ENCODE measurements at regions of chr4 and their contacts with region 1.

Region 1: GRCh38 chr4:44678094-44679041 is at the start of gene GUF1:
- DNase-seq: peak; percentile 78 to 94 (median 90)
- ATAC-seq: peak; percentile 90 to 91
- H3K4me3 Mint-ChIP-seq: peak within 1 kb of the TSS; percentile 93 to 100 (median 97)
- H3K27ac Mint-ChIP-seq: peak within 1 kb of the TSS; percentile 97 to 100 (median 100)
- H3K4me1 Mint-ChIP-seq: peaks cover 13 to 45% (median 34%) of the 10 kb centered on the region in 4 donors
- H3K27me3 Mint-ChIP-seq: no peaks in the 10 kb centered on the region
- polyA plus RNA-seq, gene GUF1: 7.9 to 12.2 (median 12.1) TPM

Region 2: DNA sequence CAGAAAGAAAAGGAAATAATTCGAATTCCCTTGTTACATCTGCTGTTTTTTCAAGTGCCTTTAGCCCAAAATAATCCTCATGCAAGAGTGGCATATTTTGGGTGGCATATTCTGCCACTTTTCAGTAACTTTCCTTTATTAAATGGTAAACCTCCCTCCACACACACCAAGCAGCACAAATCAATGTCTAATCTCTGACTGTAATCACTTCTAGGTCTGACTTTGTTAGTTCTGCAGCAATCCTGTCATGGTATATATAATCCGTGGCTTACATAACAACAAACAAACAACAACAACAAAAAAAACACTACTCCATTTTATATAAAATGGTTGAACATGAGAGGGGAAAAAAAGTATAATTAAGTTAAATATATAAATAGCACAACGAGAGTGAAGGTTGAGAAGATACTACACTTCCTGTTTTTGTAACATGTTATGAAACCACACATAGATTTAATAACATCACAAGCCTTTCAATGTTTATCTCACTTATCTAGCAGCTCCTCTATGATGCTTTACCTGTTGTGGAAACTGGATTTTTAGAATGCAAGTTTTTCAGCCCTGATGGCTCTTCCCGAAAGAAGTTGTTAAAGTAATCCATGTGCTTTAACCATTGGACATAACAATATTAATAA is 1070.4 kb before region 1 on chr4:
- POLR2A ChIA-PET with region 1: no interaction called
- DNase-seq: no peak
- ATAC-seq: no peak
- H3K4me3 Mint-ChIP-seq: peak overlapping the region in 1 of 10 donors; percentile 61
- H3K27ac Mint-ChIP-seq: peak overlapping the region in 2 of 10 donors; percentile 43 to 44
- H3K4me1 Mint-ChIP-seq: peaks cover 0 to 9% (median 0%) of the 10 kb centered on the region in 4 donors
- H3K27me3 Mint-ChIP-seq: no peaks in the 10 kb centered on the region

Region 3: GRCh38 chr4:44326741-44327140 is 351.6 kb before region 1 on chr4:
- POLR2A ChIA-PET with region 1: no interaction called
- DNase-seq: no peak
- ATAC-seq: no peak
- H3K4me3 Mint-ChIP-seq: no peak overlapping the region
- H3K27ac Mint-ChIP-seq: no peak overlapping the region
- H3K4me1 Mint-ChIP-seq: no peaks in the 10 kb centered on the region
- H3K27me3 Mint-ChIP-seq: no peaks in the 10 kb centered on the region

Region 4: DNA sequence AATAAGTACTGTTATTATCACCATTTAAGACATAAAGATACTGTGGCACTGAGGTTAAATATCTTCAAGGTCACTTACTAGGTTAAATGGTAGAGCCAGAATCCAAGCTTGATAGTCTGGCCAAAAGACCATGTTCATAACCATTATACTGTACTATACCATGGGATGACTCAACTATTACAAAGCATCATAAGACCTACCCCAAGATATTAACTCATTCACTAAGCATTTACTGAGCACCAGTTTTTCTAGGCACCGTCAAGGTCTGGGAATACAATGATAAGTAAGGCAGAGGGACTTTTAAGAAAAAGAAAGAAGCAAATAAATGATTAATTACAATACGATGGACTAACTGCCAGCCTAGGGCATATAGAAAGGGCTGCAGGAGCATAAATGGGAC is 134.2 kb before region 1 on chr4:
- POLR2A ChIA-PET with region 1: no interaction called
- DNase-seq: no peak
- ATAC-seq: no peak
- H3K4me3 Mint-ChIP-seq: no peak overlapping the region
- H3K27ac Mint-ChIP-seq: no peak overlapping the region
- H3K4me1 Mint-ChIP-seq: no peaks in the 10 kb centered on the region
- H3K27me3 Mint-ChIP-seq: peaks cover 0 to 1% (median 0%) of the 10 kb centered on the region in 5 donors

Region 5: DNA sequence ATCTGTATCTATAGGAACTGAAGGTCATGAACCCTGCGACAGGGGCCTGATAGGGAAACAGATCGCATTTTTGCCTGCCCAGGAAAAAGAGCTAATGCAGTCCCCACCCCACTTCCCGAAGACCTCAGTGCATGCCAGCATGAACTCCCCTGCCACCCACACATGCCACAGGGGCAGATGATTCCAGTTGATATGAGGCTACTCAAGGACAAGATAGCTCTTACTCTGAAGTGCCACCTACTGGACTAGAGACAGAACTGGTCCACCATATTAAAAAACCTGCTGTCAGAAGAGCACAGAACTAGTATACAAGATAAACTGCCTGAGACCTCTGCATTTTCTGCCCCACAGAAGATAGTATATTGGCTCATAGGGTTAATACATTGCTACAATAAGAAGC is 95.0 kb before region 1 on chr4:
- POLR2A ChIA-PET with region 1: no interaction called
- DNase-seq: no peak
- ATAC-seq: no peak
- H3K4me3 Mint-ChIP-seq: no peak overlapping the region
- H3K27ac Mint-ChIP-seq: no peak overlapping the region
- H3K4me1 Mint-ChIP-seq: no peaks in the 10 kb centered on the region
- H3K27me3 Mint-ChIP-seq: peaks cover 3 to 5% (median 3%) of the 10 kb centered on the region in 5 donors

Region 6: GRCh38 chr4:44726262-44726871 is 48.0 kb after region 1 on chr4 and contains the start of gene GNPDA2:
- POLR2A ChIA-PET with region 1: interaction called, 46 read pairs
- DNase-seq: peak; percentile 67 to 92 (median 77)
- ATAC-seq: peak; percentile 84 to 90
- H3K4me3 Mint-ChIP-seq: peak within 1 kb of the TSS; percentile 81 to 97 (median 95)
- H3K27ac Mint-ChIP-seq: peak within 1 kb of the TSS; percentile 77 to 96 (median 92)
- H3K4me1 Mint-ChIP-seq: peaks cover 21 to 49% (median 42%) of the 10 kb centered on the region in 4 donors
- H3K27me3 Mint-ChIP-seq: peaks cover 0 to 5% (median 0%) of the 10 kb centered on the region in 5 donors
- polyA plus RNA-seq, gene GNPDA2: 15.3 to 20.2 (median 17.5) TPM